Activated naive CD8-positive, alpha-beta T cell treated with anti-CD3 and anti-CD28 coated beads, Interleukin-2, amount 10 ng/mL, durations not matched to agents 7 days and 5 days (primary cell): ENCODE measurements at regions of chr5 and their contacts with region 1.

Region 1: DNA sequence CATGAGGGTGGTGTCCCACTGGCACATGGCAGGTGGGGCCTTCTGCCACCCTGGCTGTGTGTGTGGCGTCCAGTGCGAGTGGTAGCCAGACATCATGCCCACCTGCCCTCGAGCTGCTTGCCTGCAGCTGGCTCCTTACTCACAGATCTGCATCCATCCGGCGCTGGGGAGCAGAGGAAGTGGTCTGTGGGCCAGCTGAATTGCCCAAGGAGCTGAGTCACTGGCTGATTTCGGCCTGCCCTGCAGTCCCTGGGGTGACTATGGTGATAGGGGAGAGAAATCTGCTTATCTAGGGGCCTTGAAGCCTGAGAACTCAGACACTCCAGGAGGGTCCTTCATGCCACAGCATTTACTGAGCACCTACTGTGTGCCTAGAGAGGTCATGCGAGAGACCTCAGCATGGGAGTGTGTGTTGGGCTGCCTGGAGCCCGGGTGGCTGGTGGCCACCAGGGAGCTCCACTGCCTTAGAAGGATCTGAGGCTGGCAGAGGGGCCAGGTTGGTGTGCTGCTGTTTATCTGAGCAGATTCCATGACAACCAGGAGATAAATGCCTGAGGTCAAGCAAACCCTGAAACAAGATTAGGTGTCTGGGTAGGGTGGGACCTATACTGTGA is 57.1 kb downstream of the SLC22A5 start:
- DNase-seq: peak; percentile 76
- ATAC-seq: peak; percentile 60
- H3K4me3 Mint-ChIP-seq: peak overlapping the region; percentile 85
- H3K27ac Mint-ChIP-seq: peak overlapping the region; percentile 95
- H3K4me1 Mint-ChIP-seq: peaks cover 88% of the 10 kb centered on the region
- H3K27me3 Mint-ChIP-seq: no peaks in the 10 kb centered on the region

Region 2: GRCh38 chr5:132437604-132438266 is 11.1 kb after region 1 on chr5:
- POLR2A ChIA-PET with region 1: interaction called, 65 read pairs
- DNase-seq: peak; percentile 65
- ATAC-seq: peak; percentile 98
- H3K4me3 Mint-ChIP-seq: peak overlapping the region; percentile 66
- H3K27ac Mint-ChIP-seq: peak overlapping the region; percentile 86
- H3K4me1 Mint-ChIP-seq: peaks cover 73% of the 10 kb centered on the region
- H3K27me3 Mint-ChIP-seq: no peaks in the 10 kb centered on the region

Region 3: GRCh38 chr5:132466433-132467286 is 40.0 kb after region 1 on chr5:
- POLR2A ChIA-PET with region 1: interaction called, 162 read pairs
- DNase-seq: peak; percentile 79
- ATAC-seq: peak; percentile 80
- H3K4me3 Mint-ChIP-seq: peak overlapping the region; percentile 81
- H3K27ac Mint-ChIP-seq: peak overlapping the region; percentile 85
- H3K4me1 Mint-ChIP-seq: peaks cover 85% of the 10 kb centered on the region
- H3K27me3 Mint-ChIP-seq: no peaks in the 10 kb centered on the region

Region 4: DNA sequence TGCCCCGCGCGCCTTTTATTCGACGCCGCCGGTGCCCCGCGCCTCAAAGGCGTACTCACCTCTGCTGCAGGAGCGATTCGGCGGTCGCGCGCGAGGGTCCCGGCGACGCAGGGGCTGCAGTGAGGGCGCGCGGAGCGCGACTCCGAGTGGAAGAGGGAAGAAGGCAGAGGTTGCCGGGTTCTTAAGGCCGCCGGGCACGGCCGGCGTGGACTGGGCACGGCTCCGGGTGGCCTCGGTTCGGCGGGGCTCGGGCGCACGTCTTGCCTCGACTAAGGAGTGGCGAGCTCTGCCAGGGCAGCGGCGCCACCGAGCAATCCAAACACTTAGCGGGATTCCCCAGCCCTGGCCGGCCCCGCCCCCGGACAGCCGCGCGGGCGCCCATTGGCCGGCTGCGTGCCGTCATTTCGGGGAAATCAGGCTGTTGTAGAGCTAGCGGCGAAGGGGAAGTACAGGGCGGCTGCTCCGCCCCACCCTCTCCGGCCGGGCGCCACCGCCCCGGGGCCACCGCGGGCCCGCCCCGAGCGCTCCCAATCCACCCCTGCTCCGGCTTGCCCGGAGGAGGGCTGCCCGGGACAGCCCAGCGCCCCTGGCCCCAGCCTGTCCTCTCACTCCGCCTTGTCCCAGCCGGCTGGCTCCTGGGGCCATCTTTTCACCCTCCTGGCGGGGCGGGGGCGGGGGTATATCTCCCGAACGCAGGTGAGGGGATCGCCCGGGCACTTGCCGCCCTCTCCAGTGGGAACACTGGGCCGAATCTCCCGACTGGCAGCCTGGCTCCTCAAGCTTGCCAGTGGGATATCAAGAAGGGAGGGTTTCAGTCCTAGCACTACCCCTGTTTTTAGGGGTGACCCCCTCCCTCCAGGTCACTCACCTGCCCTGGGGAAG is 64.1 kb after region 1 on chr5 and contains the start of gene IRF1:
- POLR2A ChIA-PET with region 1: interaction called, 211 read pairs
- DNase-seq: peak; percentile 99
- ATAC-seq: peak; percentile 78
- H3K4me3 Mint-ChIP-seq: peak within 1 kb of the TSS; percentile 98
- H3K27ac Mint-ChIP-seq: peak within 1 kb of the TSS; percentile 92
- H3K4me1 Mint-ChIP-seq: peaks cover 63% of the 10 kb centered on the region
- H3K27me3 Mint-ChIP-seq: no peaks in the 10 kb centered on the region
- total RNA-seq, gene IRF1: 228 to 238 TPM

Region 5: DNA sequence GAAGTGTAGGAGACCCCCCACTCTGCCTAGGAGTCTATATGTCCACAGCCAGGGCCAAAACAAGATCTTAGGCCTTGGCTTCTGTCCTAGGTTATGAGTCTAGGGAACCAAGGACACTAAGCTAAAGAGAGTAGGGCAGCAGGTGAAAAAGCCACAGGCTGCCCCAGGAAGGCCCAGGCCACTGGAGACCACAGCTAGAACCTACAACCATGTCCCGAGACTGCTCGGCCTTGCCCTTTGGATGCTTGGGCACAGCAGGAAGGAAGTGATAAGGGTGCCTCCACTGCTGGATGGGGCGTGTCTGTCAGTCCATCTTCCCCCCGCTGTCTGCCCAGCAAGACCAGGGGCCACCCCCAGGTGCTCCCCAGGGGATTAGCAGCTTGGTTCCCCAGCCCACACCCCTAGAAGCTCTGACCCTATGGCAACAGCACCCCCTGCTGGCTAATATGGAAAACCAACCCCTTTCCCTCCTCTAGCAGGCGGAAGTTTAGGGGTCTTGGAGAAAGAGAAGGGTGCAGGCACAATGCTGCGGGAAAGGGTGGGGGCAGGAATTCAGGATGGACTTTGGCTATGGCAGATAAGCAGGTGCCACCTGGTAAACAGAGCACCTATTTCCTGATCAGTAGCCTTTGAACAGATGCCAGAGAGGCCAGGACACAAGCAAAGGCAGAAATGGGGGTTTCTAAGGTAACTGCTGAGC is 74.4 kb after region 1 on chr5:
- POLR2A ChIA-PET with region 1: interaction called, 108 read pairs
- DNase-seq: peak; percentile 72
- ATAC-seq: peak; percentile 20
- H3K4me3 Mint-ChIP-seq: no peak overlapping the region
- H3K27ac Mint-ChIP-seq: peak overlapping the region; percentile 63
- H3K4me1 Mint-ChIP-seq: peaks cover 32% of the 10 kb centered on the region
- H3K27me3 Mint-ChIP-seq: no peaks in the 10 kb centered on the region